ENCODE measurements at regions of chr13 and their contacts with region 1.

Region 1: DNA sequence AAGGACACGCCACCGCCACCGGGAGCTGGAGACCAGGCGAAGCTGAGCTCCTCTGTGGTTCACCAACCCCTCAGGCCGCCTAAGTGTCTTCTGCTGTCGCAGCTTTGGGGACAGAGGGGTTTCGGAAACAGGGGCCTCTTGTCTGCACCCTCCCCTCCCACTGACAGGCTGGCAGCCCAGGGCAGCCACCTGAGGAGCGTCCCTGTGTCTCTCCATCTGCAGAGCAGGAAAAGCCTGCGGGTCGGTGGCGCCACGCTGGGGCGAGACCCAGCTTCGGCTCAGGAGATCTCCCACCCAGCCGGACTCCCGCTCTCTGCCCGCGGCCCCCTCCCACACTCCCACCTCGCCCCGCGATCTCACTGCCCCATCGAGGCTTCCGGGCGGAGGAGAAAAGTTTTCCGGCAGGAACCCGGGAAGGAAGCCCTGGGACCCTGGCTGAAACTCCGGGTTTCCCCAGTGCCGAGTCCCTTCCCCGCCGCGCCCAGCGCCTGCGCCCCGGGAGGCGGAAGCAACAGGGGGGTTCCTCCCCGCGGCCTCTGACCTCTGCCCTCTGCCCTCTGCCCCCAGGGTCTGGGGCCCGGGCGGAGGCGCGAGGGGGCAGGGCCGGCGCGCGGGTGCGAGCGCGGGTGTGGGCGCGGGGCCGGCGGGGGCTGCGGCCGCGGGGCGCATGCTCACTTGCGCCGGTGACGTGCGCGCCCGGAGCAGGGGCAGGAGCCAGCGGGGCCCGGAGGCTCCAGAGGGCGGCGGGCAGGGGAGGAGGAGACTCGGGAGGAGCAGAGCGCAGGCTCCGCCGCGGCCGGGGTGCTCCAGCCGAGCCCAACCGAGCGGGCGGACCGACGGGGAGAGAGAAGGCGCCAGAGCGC is at the start of gene ATP11A:
- DNase-seq: peak; percentile 82 to 93 (median 84)
- H3K4me3 ChIP-seq: peak within 1 kb of the TSS; percentile 85 to 97 (median 97)
- H3K4me3 Mint-ChIP-seq: peak within 1 kb of the TSS; percentile 97 to 98
- H3K27ac ChIP-seq: peak within 1 kb of the TSS; percentile 95 to 100
- H3K27ac Mint-ChIP-seq: peak within 1 kb of the TSS; percentile 97 to 99 (median 98)
- H3K4me1 ChIP-seq: peaks cover 52% of the 10 kb centered on the region in 2 donors
- H3K4me1 Mint-ChIP-seq: peaks cover 58% of the 10 kb centered on the region
- H3K27me3 ChIP-seq: no peaks in the 10 kb centered on the region
- H3K27me3 Mint-ChIP-seq: peaks cover 0 to 4% (median 0%) of the 10 kb centered on the region in 3 donors
- CTCF ChIP-seq: no peak
- polyA plus RNA-seq, gene ATP11A: 7.2 to 45.4 (median 7.6) TPM

Region 2: GRCh38 chr13:112587212-112587763 is 102.2 kb before region 1 on chr13:
- intact Hi-C with region 1: loop called in 1 of 2 experiments (anchors 5 kb)
- DNase-seq: peak; percentile 78 to 82 (median 81)
- H3K4me3 ChIP-seq: peak overlapping the region; percentile 83 to 96 (median 88)
- H3K4me3 Mint-ChIP-seq: peak overlapping the region; percentile 95 to 99
- H3K27ac ChIP-seq: peak overlapping the region; percentile 87 to 91
- H3K27ac Mint-ChIP-seq: peak overlapping the region; percentile 91 to 99 (median 97)
- H3K4me1 ChIP-seq: peaks cover 48 to 60% of the 10 kb centered on the region in 2 donors
- H3K4me1 Mint-ChIP-seq: peaks cover 58% of the 10 kb centered on the region
- H3K27me3 ChIP-seq: no peaks in the 10 kb centered on the region
- H3K27me3 Mint-ChIP-seq: peaks cover 0 to 2% (median 0%) of the 10 kb centered on the region in 3 donors
- CTCF ChIP-seq: no peak

Region 3: GRCh38 chr13:112626124-112626523 is 63.4 kb before region 1 on chr13:
- intact Hi-C with region 1: no loop called
- DNase-seq: no peak
- H3K4me3 ChIP-seq: no peak overlapping the region
- H3K4me3 Mint-ChIP-seq: no peak overlapping the region
- H3K27ac ChIP-seq: no peak overlapping the region
- H3K27ac Mint-ChIP-seq: no peak overlapping the region
- H3K4me1 ChIP-seq: no peaks in the 10 kb centered on the region
- H3K4me1 Mint-ChIP-seq: no peaks in the 10 kb centered on the region
- H3K27me3 ChIP-seq: no peaks in the 10 kb centered on the region
- H3K27me3 Mint-ChIP-seq: peaks cover 4 to 12% (median 10%) of the 10 kb centered on the region in 3 donors
- CTCF ChIP-seq: no peak

Region 4: DNA sequence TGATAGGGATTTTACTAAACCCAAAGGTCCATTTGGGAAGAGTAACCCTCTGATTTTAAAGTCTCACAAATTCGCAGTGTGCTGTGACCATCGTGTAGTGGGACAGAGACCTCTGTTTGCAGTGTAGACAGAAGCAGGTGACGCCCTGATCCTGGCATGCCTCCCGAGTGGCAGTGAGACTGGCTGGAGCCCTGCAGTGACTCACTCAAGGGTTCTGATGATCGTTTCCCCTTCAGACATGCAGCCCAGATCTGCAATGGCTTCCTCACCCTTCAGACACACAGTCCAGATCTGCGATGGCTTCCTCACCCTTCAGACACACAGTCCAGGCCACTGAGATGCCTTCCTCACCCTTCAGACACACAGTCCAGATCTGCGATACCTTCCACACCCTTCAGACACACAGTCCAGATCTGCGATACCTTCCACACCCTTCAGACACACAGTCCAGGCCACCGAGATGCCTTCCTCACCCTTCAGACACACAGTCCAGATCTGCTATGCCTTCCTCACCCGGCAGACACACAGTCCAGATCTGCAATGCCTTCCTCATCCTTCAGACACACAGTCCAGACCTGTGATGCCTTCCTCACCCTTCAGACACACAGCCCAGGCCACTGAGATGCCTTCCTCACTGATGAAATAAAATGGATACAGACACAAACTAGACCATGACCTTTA is 125.5 kb after region 1 on chr13:
- intact Hi-C with region 1: no loop called
- DNase-seq: no peak
- H3K4me3 ChIP-seq: no peak overlapping the region
- H3K4me3 Mint-ChIP-seq: no peak overlapping the region
- H3K27ac ChIP-seq: no peak overlapping the region
- H3K27ac Mint-ChIP-seq: peak overlapping the region in 2 of 7 donors; percentile 13 to 17
- H3K4me1 ChIP-seq: no peaks in the 10 kb centered on the region
- H3K4me1 Mint-ChIP-seq: no peaks in the 10 kb centered on the region
- H3K27me3 ChIP-seq: no peaks in the 10 kb centered on the region
- H3K27me3 Mint-ChIP-seq: peaks cover 0 to 2% (median 0%) of the 10 kb centered on the region in 3 donors
- CTCF ChIP-seq: no peak

Measured in CD14-positive monocyte (primary cell).